ENCODE measurements at regions of chr5 and their contacts with region 1.

Region 1: GRCh38 chr5:151252762-151253604 is at the start of gene GM2A:
- DNase-seq: peak; percentile 99
- H3K4me3 Mint-ChIP-seq: peak within 1 kb of the TSS; percentile 82
- H3K27ac Mint-ChIP-seq: peak within 1 kb of the TSS; percentile 92
- H3K4me1 Mint-ChIP-seq: peaks cover 51% of the 10 kb centered on the region
- H3K27me3 Mint-ChIP-seq: no peaks in the 10 kb centered on the region
- total RNA-seq, gene GM2A: 22.4 to 24.5 TPM

Region 2: DNA sequence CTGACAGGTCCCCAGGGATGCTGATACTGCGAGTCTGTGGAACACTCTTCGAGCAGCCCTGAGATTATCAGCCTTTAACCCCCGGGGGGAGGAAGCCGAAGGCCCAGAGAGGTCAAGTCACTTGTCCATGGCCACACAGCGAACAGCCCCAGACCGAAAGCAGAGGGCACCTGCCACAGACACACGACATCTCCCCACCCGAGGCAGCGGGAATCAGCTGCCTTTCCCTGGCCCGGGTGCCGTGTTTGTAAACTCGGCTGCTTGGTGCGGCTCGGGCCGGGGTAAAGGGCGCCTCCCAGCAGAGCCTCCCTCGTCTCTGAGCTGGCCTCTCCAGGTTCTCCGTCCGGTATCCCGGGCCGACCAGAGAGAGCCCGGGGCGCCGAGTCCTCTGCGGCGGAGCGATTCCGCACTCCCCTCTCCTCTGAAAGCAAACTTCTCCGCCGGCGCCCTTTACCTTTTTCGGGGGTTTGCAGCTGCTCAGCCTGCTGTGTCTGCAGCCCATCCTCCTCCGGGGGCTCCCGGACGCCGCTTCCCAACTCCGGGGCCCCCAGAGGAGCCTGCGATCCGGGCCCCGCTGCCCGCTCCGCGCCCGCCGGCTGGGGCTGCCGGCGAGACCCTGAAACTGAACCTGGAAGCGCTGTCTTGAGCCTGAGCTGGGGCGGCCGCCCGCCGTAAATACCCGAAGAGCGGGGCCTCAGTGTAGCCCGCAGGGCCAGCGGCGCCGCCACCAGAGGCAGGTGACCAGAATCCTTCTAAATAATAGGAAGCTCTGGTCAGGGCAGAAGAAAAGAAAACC is 29.3 kb before region 1 on chr5 and contains the start of gene CCDC69:
- CTCF ChIA-PET with region 1: interaction called, 21 read pairs
- POLR2A ChIA-PET with region 1: interaction called, 45 read pairs
- DNase-seq: peak; percentile 67
- H3K4me3 Mint-ChIP-seq: peak within 1 kb of the TSS; percentile 78
- H3K27ac Mint-ChIP-seq: peak within 1 kb of the TSS; percentile 85
- H3K4me1 Mint-ChIP-seq: peaks cover 55% of the 10 kb centered on the region
- H3K27me3 Mint-ChIP-seq: no peaks in the 10 kb centered on the region
- total RNA-seq, gene CCDC69: 62.6 to 64.2 TPM

Region 3: DNA sequence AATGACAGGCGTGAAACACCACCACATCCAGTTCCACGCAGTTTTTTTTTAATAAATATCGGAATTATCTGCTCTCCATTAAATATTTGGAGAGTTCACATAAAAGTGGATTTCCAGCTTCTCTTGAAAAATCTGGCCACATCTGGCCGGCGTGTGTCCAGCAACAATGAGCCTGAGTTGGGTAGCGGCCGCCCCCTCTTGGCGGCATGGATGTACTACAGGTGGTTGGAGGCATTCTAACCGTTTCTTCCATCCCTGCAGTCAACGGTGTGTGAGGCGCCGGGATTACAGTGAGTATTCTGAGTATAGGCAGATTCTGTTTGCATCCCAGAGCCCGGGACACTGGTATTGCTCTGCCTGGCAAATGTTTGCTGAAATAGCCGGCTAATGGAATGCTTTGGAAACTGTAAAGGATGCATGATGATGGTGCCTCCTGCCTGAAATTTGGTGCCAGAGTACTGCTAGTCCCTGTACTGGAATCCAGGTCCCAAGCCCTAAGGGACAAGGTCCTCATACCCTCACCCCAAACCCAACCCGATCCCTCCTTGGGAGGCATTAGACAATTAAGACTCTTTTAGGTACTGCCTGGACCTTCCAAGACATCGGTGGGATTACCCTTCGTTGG is 13.6 kb before region 1 on chr5:
- CTCF ChIA-PET with region 1: interaction called, 21 read pairs
- POLR2A ChIA-PET with region 1: interaction called, 9 read pairs
- DNase-seq: peak; percentile 52
- H3K4me3 Mint-ChIP-seq: no peak overlapping the region
- H3K27ac Mint-ChIP-seq: no peak overlapping the region
- H3K4me1 Mint-ChIP-seq: peaks cover 40% of the 10 kb centered on the region
- H3K27me3 Mint-ChIP-seq: no peaks in the 10 kb centered on the region

Region 4: GRCh38 chr5:151315998-151316597 is 63.1 kb after region 1 on chr5:
- CTCF ChIA-PET with region 1: interaction called, 10 read pairs
- POLR2A ChIA-PET with region 1: no interaction called
- DNase-seq: peak; percentile 62
- H3K4me3 Mint-ChIP-seq: no peak overlapping the region
- H3K27ac Mint-ChIP-seq: no peak overlapping the region
- H3K4me1 Mint-ChIP-seq: no peaks in the 10 kb centered on the region
- H3K27me3 Mint-ChIP-seq: peaks cover 11% of the 10 kb centered on the region